ENCODE measurements at regions of chr17 and their contacts with region 1.

Region 1: DNA sequence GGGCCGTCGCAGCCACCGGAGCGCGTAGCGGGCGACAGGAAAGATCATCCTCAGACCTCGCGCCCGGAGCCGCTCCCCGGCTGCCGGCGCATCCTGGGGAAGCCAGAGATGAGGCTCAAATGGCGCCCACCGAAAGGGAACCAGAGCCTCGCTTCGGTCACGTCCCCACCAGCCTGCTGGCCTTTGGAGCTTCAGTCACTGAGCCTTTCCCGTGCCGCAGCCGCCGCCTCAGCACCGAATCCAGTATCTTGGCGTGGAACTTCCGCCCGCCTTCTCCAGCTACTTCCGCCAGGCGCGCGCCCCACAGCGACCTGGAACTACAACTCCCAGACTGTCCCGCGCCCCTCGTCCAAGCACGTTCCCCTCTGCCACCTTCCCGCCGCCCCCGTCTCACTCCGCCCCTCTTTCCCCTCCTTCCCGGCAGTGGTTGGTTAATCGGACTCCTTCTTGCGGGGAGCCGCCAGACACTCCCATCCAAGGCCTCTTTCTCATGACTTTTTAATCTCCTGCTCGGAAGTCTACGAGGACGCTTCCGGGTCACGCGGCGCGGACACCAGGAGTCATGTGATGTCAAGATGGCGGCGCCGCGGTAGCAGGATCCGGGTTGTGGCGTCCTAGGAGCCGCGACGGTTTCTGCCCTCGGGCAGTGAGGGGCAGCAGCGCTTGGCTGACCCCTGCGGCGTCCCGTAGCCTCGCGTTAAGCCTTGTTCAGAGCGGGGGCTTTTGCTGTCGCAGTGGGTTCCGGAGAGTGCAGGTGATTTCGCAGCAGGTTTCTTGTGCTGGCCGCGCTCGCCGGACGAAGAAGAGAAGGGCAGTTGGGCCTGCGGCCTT is at the starts of genes SMCR8 and TOP3A:
- DNase-seq: peak; percentile 100
- H3K4me3 ChIP-seq: peak within 1 kb of the TSS; percentile 76 to 86 (median 82)
- H3K27ac ChIP-seq: peak within 1 kb of the TSS; percentile 86 to 88 (median 88)
- H3K4me1 ChIP-seq: peaks cover 61 to 76% (median 70%) of the 10 kb centered on the region in 4 donors
- H3K27me3 ChIP-seq: no peaks in the 10 kb centered on the region
- CTCF ChIP-seq: peak in 1 of 3 experiments; percentile 4
- EP300 ChIP-seq: no peak
- POLR2A ChIP-seq: no peak
- total RNA-seq, gene SMCR8: 13.3 to 20.5 (median 17.3) TPM
- total RNA-seq, gene TOP3A: 21.2 to 33.5 (median 21.8) TPM

Region 2: DNA sequence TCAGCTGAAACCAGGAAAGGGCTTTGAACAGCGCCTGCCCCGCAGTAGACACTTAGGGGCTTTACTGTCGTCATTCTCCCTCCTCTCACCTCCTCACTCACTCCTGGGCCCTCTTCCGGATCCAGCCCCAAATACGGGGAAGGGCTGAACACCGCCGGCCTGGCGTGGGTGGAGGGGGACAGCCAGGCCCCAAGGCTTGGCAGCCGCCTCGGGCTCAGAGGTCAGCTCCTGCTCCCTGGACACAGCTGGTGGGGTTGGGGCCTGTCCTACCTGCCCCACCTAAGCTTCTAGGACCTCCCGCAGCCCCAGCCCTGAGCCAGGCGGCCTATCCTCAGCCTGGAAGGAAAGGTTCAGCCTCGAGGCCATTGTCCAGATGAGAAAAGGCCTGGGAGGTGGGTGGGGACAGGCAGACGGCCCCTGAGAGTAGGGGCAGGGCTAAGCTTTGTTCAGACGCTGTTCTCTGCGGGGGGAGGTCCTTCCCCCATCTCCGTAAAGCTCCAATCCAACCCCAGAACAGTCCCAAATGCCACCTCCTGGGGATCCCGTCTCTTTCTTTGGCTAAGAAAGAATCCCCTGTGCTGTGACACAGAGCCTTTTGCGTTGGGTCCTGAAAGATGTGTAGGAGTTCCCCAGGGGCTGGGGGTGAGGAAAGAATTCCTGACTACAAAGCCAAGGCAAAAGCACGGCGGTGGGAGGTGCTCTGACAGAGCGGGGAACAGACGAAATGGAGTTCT is 90.4 kb before region 1 on chr17:
- intact Hi-C with region 1: loop called (anchors 5 kb)
- DNase-seq: no peak
- H3K4me3 ChIP-seq: peak overlapping the region; percentile 66 to 89 (median 72)
- H3K27ac ChIP-seq: peak overlapping the region; percentile 63 to 76 (median 68)
- H3K4me1 ChIP-seq: peaks cover 14 to 48% (median 27%) of the 10 kb centered on the region in 4 donors
- H3K27me3 ChIP-seq: no peaks in the 10 kb centered on the region
- CTCF ChIP-seq: no peak
- EP300 ChIP-seq: no peak
- POLR2A ChIP-seq: no peak

Region 3: GRCh38 chr17:18363101-18364049 is 48.4 kb after region 1 on chr17 and contains the start of gene SHMT1:
- intact Hi-C with region 1: loop called (anchors 2 kb)
- DNase-seq: peak; percentile 98
- H3K4me3 ChIP-seq: peak within 1 kb of the TSS; percentile 81 to 99 (median 88)
- H3K27ac ChIP-seq: peak within 1 kb of the TSS; percentile 79 to 89 (median 84)
- H3K4me1 ChIP-seq: peaks cover 15 to 30% (median 23%) of the 10 kb centered on the region in 4 donors
- H3K27me3 ChIP-seq: no peaks in the 10 kb centered on the region
- CTCF ChIP-seq: peak in 1 of 3 experiments; percentile 3
- EP300 ChIP-seq: no peak
- POLR2A ChIP-seq: no peak
- total RNA-seq, gene SHMT1: 17.4 to 30.6 (median 24.0) TPM

Measured in esophagus muscularis mucosa (tissue), 4 donors.